Endothelial cell of umbilical vein (primary cell): ENCODE measurements at regions of chr11 and their contacts with region 1.

Region 1: DNA sequence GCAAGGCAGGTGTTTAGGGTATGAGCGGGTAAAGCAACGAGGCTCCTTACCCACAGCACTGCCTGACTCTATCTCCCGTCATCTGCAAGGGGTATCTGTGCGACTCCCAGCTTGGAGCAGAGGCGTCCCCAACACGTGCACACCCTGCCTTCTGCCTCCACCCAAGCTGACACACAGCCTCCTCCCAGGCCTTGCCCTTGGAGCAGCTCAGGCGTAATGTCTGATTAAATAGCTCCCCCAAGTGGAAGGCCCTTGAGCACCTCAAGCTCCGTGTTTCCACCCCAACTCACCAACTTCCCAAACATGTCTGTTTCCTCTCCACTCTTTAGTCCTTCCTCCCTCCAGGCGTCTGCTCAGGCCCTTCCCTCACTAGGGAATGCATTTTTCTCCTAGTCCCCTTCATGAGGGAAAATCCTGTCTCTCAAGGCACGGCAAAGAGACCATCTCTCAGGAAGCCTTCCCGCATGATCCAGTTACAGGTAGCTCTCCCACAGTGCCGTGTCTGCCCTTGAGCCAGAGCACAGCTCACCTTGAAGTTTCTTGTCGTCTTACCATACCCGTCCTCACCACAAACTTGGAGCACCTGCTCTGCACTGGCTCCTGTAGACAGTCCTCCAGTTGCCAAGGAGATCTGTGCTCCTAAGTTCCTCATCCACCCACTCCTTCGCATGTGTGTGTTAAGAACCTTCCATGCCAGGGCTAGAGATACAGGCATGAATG is 15.8 kb downstream of the CYB5R2 start:
- DNase-seq: peak; percentile 75
- H3K4me3 ChIP-seq: no peak overlapping the region
- H3K27ac ChIP-seq: no peak overlapping the region
- H3K4me1 ChIP-seq: no peaks in the 10 kb centered on the region
- H3K27me3 ChIP-seq: no peaks in the 10 kb centered on the region
- CTCF ChIP-seq: peak; percentile 64 to 80
- POLR2A ChIP-seq: no peak

Region 2: DNA sequence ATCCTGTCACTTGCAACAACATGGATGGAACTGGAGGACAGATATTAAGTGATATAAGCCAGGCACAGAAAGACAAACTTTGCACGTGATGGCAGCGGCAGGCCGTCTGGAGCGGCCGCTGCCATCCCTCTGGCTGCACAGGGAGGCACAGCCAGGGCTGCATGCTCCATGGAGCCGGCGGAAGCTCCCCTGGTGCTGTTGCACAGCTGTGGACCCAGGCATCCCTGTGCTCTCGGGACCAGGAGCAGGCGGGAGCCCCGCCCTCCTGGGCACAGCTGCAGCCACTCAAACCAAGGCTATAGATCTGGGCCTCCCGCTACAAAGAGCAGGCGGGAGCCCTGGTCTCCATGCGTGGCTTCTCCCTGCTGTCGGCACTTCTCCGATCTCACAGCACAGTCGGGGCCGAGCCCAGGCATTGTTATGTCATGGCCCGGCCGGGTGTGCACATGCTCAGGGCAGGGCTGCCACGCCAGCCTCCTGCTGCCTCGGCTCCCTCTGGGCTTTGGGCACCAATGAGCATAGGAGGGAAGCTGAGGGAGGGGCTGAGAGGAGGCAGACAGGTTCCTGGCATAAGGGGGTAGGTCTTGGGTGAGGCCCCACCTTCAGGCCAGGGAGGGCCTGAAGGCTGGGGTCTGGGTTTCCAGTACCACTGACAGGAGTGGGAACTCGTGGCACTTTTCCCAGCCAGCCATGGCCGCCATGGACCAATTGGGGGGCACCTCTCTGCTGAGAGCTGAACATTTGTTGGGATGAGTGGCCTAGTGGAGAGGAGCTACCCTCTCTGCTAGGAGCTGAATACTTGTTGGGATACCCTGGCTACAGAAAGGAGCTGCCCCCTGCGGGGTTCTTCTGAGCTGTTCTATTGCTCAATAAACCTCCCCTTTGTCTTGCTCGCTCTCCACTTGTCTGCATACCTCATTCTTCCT is 1070.8 kb before region 1 on chr11:
- CTCF ChIA-PET with region 1: no interaction called
- POLR2A ChIA-PET with region 1: no interaction called
- dilution Hi-C with region 1: no loop called
- intact Hi-C with region 1: no loop called
- DNase-seq: no peak
- H3K4me3 ChIP-seq: no peak overlapping the region
- H3K27ac ChIP-seq: no peak overlapping the region
- H3K4me1 ChIP-seq: no peaks in the 10 kb centered on the region
- H3K27me3 ChIP-seq: no peaks in the 10 kb centered on the region
- CTCF ChIP-seq: no peak
- POLR2A ChIP-seq: no peak

Region 3: GRCh38 chr11:7165911-7166310 is 491.6 kb before region 1 on chr11:
- CTCF ChIA-PET with region 1: no interaction called
- POLR2A ChIA-PET with region 1: no interaction called
- dilution Hi-C with region 1: no loop called
- intact Hi-C with region 1: no loop called
- DNase-seq: no peak
- H3K4me3 ChIP-seq: no peak overlapping the region
- H3K27ac ChIP-seq: no peak overlapping the region
- H3K4me1 ChIP-seq: no peaks in the 10 kb centered on the region
- H3K27me3 ChIP-seq: no peaks in the 10 kb centered on the region
- CTCF ChIP-seq: no peak
- POLR2A ChIP-seq: no peak

Region 4: GRCh38 chr11:7353100-7353499 is 304.4 kb before region 1 on chr11:
- CTCF ChIA-PET with region 1: interaction called, 22 read pairs
- POLR2A ChIA-PET with region 1: no interaction called
- dilution Hi-C with region 1: no loop called
- intact Hi-C with region 1: no loop called
- DNase-seq: peak; percentile 24
- H3K4me3 ChIP-seq: no peak overlapping the region
- H3K27ac ChIP-seq: no peak overlapping the region
- H3K4me1 ChIP-seq: no peaks in the 10 kb centered on the region
- H3K27me3 ChIP-seq: peaks cover 0 to 5% of the 10 kb centered on the region in 2 experiments
- CTCF ChIP-seq: peak; percentile 21 to 37
- POLR2A ChIP-seq: no peak

Region 5: DNA sequence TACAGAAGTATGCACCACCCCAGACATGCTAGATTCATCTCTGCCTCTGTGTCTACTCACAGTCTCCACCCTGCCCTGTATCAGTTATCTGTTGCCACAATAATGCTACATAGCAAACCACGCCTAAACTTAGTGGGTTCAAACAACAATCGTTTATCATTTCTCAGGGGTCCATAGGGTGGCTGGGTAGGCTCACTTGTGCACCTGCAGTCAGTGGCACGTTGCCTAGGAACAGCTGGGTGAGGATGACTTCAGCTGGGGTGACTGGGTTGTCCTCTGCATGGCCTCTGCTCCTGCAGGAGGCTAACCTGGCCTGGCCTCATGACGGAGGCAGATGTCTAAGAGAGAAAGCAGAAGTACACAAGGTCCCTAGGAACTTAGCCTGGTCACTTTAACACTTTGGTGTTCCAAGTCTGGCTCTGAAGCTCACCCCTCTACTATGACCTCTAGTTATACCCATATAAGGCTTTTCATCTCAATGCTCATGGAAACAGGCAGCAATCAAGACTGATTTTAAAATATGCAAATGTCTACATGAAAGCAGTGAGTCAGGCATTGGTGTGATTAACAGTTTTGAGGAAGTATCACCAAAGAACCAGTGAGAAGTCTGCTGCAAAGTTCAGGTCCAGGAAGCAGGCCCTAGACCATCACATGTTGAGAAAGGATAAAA is 161.4 kb before region 1 on chr11:
- CTCF ChIA-PET with region 1: no interaction called
- POLR2A ChIA-PET with region 1: no interaction called
- dilution Hi-C with region 1: no loop called
- intact Hi-C with region 1: no loop called
- DNase-seq: no peak
- H3K4me3 ChIP-seq: no peak overlapping the region
- H3K27ac ChIP-seq: no peak overlapping the region
- H3K4me1 ChIP-seq: no peaks in the 10 kb centered on the region
- H3K27me3 ChIP-seq: no peaks in the 10 kb centered on the region
- CTCF ChIP-seq: no peak
- POLR2A ChIP-seq: no peak

Region 6: GRCh38 chr11:7513234-7514098 is 144.0 kb before region 1 on chr11 and contains the start of gene PPFIBP2:
- CTCF ChIA-PET with region 1: interaction called, 52 read pairs
- POLR2A ChIA-PET with region 1: no interaction called
- dilution Hi-C with region 1: no loop called
- intact Hi-C with region 1: loop called (anchors 1 kb)
- DNase-seq: peak; percentile 63
- H3K4me3 ChIP-seq: peak within 1 kb of the TSS; percentile 43 to 65 (median 52)
- H3K27ac ChIP-seq: no peak within 1 kb of the TSS
- H3K4me1 ChIP-seq: peaks cover 6% of the 10 kb centered on the region
- H3K27me3 ChIP-seq: peaks cover 26 to 32% of the 10 kb centered on the region in 2 experiments
- CTCF ChIP-seq: peak; percentile 61 to 76
- POLR2A ChIP-seq: no peak
- total RNA-seq, gene PPFIBP2: 1.3 and 2.6 TPM in 2 replicates

Region 7: DNA sequence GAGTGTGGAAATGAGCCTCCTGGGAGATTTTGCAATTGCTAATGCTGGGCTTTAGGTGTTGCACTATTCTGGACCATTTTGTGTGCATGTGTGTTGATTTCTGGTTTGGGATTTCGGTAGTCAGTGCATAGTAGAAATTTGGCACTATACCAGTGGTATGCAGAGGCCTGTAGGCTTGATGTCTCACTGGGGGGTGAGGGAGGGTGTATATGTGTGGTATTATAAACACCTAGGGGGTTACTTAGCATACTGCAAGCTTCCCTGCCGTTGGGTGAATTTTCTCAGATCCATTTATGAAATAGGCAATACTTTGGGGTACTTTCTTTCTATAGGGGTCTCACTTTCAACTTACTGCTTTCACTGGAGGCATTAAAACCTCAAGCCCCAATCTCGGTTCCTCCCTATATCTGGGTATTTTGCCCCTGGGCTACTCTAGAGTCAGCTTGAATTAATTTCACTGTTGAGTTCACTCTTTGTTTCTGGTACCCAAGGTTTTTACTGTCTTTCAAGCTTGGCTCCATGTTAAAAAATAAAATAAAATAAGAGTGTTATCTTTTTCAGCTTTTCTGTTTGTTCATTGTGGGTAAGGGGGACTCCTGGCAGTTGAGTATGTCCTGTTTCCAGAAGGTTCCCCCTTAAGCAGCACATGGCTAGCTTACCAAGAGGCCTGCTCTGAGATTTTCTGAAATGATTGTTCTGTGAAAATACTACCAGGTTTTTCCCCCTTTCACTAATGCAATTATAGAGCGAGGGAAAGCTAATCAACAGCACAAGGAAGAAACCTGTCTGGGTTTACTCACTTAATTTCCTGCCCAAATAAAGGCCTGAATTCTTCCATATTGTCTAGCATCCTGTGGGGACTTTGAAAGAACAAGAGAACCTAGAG is 97.8 kb before region 1 on chr11:
- CTCF ChIA-PET with region 1: interaction called, 18 read pairs
- POLR2A ChIA-PET with region 1: no interaction called
- dilution Hi-C with region 1: no loop called
- intact Hi-C with region 1: no loop called
- DNase-seq: no peak
- H3K4me3 ChIP-seq: no peak overlapping the region
- H3K27ac ChIP-seq: no peak overlapping the region
- H3K4me1 ChIP-seq: no peaks in the 10 kb centered on the region
- H3K27me3 ChIP-seq: peaks cover 2 to 5% of the 10 kb centered on the region in 2 experiments
- CTCF ChIP-seq: no peak
- POLR2A ChIP-seq: no peak

Region 8: DNA sequence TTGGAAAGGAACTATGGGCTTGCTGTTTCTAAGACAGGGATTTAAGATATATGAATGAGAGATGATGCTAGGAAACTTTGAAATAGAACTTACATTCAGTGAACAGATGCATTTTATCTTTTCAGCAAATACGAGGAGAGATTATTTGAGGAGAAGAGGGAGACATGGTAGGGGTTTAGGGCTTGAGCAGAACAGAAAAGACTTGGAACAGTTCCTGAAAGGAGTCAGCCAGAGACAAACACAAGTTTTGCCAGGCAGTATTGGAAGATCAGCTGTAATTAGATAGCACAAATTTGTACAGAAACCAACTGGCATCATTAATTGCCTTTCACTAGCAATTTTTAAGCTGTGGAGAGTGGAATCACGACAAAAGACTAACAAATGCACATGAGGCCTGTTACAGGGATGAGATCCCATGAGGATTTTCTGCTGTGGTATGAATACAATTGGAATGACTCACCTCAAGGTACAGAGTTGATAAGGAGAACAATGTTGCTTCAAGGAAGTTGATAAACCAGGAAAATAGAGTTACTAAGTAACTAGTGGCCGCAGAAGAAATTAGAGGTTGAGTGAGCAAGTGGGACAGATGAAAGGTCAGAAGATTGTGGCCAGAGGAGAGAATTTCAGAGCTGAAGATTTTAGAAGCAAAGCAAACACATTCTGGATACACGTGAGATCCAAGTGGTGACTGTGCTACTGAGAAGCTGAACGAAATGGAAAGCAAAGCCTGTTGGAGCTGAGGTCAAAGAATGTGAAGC is 52.1 kb before region 1 on chr11:
- CTCF ChIA-PET with region 1: interaction called, 25 read pairs
- POLR2A ChIA-PET with region 1: no interaction called
- dilution Hi-C with region 1: no loop called
- intact Hi-C with region 1: no loop called
- DNase-seq: peak; percentile 98
- H3K4me3 ChIP-seq: peak overlapping the region in 1 of 3 experiments; percentile 1
- H3K27ac ChIP-seq: peak overlapping the region; percentile 85
- H3K4me1 ChIP-seq: peaks cover 35% of the 10 kb centered on the region
- H3K27me3 ChIP-seq: no peaks in the 10 kb centered on the region
- CTCF ChIP-seq: no peak
- POLR2A ChIP-seq: peak; percentile 78

Region 9: GRCh38 chr11:7637447-7638157 is 19.9 kb before region 1 on chr11:
- CTCF ChIA-PET with region 1: interaction called, 22 read pairs
- POLR2A ChIA-PET with region 1: no interaction called
- dilution Hi-C with region 1: no loop called
- intact Hi-C with region 1: no loop called
- DNase-seq: peak; percentile 62
- H3K4me3 ChIP-seq: no peak overlapping the region
- H3K27ac ChIP-seq: peak overlapping the region; percentile 19
- H3K4me1 ChIP-seq: peaks cover 10% of the 10 kb centered on the region
- H3K27me3 ChIP-seq: no peaks in the 10 kb centered on the region
- CTCF ChIP-seq: no peak
- POLR2A ChIP-seq: no peak

Region 10: GRCh38 chr11:7694235-7694634 is 36.8 kb after region 1 on chr11:
- CTCF ChIA-PET with region 1: interaction called, 11 read pairs
- POLR2A ChIA-PET with region 1: no interaction called
- dilution Hi-C with region 1: no loop called
- intact Hi-C with region 1: no loop called
- DNase-seq: no peak
- H3K4me3 ChIP-seq: no peak overlapping the region
- H3K27ac ChIP-seq: no peak overlapping the region
- H3K4me1 ChIP-seq: no peaks in the 10 kb centered on the region
- H3K27me3 ChIP-seq: peaks cover 37 to 40% of the 10 kb centered on the region in 2 experiments
- CTCF ChIP-seq: no peak
- POLR2A ChIP-seq: no peak